ENCODE measurements at regions of chr18 and their contacts with region 1.

Region 1: DNA sequence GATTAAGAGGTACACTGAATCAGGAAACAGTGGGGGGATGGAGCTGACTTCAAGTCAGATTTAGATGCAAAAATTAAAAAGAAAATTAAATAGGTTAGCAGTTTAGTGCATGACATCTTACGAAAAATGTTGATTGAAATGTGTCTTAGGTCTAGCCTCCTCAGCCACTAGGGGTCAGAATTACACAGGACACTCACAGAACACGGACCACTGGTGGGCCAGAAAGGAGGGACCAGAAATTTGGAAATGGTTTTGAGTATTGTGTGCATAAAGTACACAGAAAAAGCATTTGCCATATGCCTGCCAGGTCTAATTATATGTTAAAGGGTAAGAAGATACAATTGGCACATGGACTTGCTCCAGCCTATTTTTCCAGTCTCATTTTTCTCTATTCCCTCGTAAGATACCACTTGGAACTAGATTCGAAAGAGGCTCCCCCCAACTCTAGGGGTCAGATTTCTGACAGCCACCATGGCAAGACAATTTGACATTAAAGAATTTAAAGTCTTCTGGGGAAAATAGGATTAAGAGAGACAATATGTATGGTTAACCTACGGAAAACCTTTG is 550.2 kb upstream of the SETBP1 start:
- DNase-seq: no peak
- ATAC-seq: no peak
- H3K4me3 Mint-ChIP-seq: no peak overlapping the region
- H3K27ac Mint-ChIP-seq: no peak overlapping the region
- H3K4me1 Mint-ChIP-seq: peaks cover 8% of the 10 kb centered on the region
- H3K27me3 Mint-ChIP-seq: peaks cover 7% of the 10 kb centered on the region
- CTCF ChIP-seq: peak; percentile 24

Region 2: DNA sequence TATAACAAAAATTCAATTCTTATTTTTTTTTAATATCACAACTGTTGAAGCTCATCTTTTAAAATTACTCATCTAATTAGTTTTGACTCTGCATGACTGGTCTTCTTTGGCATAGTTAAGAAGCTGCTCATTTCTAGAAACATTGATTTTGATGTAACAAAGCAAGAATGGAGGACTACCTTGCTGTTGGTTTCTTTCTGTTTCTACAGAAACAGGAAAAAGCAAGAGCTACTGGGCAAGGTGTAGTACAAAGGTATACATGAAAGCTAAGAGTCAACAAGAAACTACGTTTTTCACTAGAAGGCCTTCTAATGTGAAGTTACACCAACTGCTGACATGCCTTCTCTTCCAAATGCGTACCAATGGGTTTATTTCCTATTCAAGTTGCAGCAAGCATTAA is 762.6 kb before region 1 on chr18:
- CTCF ChIA-PET with region 1: no interaction called
- POLR2A ChIA-PET with region 1: no interaction called
- intact Hi-C with region 1: no loop called
- DNase-seq: no peak
- ATAC-seq: no peak
- H3K4me3 Mint-ChIP-seq: no peak overlapping the region
- H3K27ac Mint-ChIP-seq: no peak overlapping the region
- H3K4me1 Mint-ChIP-seq: no peaks in the 10 kb centered on the region
- H3K27me3 Mint-ChIP-seq: no peaks in the 10 kb centered on the region
- CTCF ChIP-seq: no peak

Region 3: GRCh38 chr18:44079606-44080005 is 50.9 kb before region 1 on chr18:
- CTCF ChIA-PET with region 1: no interaction called
- POLR2A ChIA-PET with region 1: no interaction called
- intact Hi-C with region 1: no loop called
- DNase-seq: no peak
- ATAC-seq: no peak
- H3K4me3 Mint-ChIP-seq: no peak overlapping the region
- H3K27ac Mint-ChIP-seq: no peak overlapping the region
- H3K4me1 Mint-ChIP-seq: no peaks in the 10 kb centered on the region
- H3K27me3 Mint-ChIP-seq: no peaks in the 10 kb centered on the region
- CTCF ChIP-seq: no peak

Region 4: DNA sequence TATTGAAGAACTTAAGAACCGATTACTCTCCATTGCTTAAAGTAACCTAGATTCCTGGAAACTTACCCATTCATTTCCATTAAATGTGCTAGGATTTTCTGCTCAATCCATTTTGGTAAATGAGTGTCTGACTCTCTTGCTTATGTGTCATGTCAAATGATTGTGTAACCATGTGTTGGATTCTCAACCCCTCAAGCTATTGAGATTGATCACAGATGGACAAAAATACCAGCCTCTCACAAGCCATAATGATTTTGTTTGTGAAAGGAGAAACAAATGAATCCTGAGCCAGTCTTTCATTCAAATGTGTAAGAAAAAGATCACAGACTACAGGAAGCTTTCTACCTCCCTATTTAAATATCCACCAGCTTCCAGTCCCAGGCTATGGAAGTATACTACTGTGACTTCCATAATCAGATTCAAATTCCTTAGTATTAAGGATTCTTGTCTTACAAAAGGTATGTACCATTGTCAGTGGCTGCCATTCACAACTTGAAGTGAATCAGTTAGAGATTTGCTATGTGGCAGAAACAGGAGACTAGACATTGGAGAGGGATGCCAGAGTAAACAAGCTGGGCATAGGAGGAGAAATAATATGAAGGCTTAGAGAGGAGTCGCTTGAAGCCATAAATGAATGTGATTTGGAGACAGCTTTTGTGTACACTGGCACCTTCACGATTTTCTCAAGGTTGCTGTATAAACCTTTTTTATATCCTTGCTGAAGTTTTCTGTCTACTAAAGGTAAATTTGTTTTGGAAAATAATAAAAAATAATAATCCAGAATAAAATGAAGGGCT is 51.7 kb after region 1 on chr18:
- CTCF ChIA-PET with region 1: no interaction called
- POLR2A ChIA-PET with region 1: no interaction called
- intact Hi-C with region 1: no loop called
- DNase-seq: no peak
- ATAC-seq: no peak
- H3K4me3 Mint-ChIP-seq: no peak overlapping the region
- H3K27ac Mint-ChIP-seq: no peak overlapping the region
- H3K4me1 Mint-ChIP-seq: no peaks in the 10 kb centered on the region
- H3K27me3 Mint-ChIP-seq: peaks cover 13% of the 10 kb centered on the region
- CTCF ChIP-seq: no peak

Region 5: GRCh38 chr18:44895176-44895798 is 764.8 kb after region 1 on chr18:
- CTCF ChIA-PET with region 1: no interaction called
- POLR2A ChIA-PET with region 1: no interaction called
- intact Hi-C with region 1: loop called (anchors 5 kb)
- DNase-seq: no peak
- ATAC-seq: peak; percentile 62
- H3K4me3 Mint-ChIP-seq: no peak overlapping the region
- H3K27ac Mint-ChIP-seq: no peak overlapping the region
- H3K4me1 Mint-ChIP-seq: peaks cover 47% of the 10 kb centered on the region
- H3K27me3 Mint-ChIP-seq: no peaks in the 10 kb centered on the region
- CTCF ChIP-seq: no peak

Region 6: GRCh38 chr18:44973282-44973681 is 842.8 kb after region 1 on chr18:
- CTCF ChIA-PET with region 1: no interaction called
- POLR2A ChIA-PET with region 1: no interaction called
- intact Hi-C with region 1: loop called (anchors 5 kb)
- DNase-seq: no peak
- ATAC-seq: no peak
- H3K4me3 Mint-ChIP-seq: no peak overlapping the region
- H3K27ac Mint-ChIP-seq: no peak overlapping the region
- H3K4me1 Mint-ChIP-seq: peaks cover 22% of the 10 kb centered on the region
- H3K27me3 Mint-ChIP-seq: no peaks in the 10 kb centered on the region
- CTCF ChIP-seq: no peak

Measured in activated B cell treated with CpG ODN at 0.5 μM for 24 hours (primary cell).